Transverse colon (tissue), 4 donors: ENCODE measurements at regions of chr7 and their contacts with region 1.

Region 1: GRCh38 chr7:106570948-106571418 is 90.0 kb downstream of the CCDC71L start:
- DNase-seq: no peak
- H3K4me3 ChIP-seq: no peak overlapping the region
- H3K27ac ChIP-seq: no peak overlapping the region
- H3K4me1 ChIP-seq: peaks cover 0 to 4% (median 0%) of the 10 kb centered on the region in 4 donors
- H3K27me3 ChIP-seq: no peaks in the 10 kb centered on the region
- CTCF ChIP-seq: no peak
- EP300 ChIP-seq: no peak
- POLR2A ChIP-seq: no peak

Region 2: DNA sequence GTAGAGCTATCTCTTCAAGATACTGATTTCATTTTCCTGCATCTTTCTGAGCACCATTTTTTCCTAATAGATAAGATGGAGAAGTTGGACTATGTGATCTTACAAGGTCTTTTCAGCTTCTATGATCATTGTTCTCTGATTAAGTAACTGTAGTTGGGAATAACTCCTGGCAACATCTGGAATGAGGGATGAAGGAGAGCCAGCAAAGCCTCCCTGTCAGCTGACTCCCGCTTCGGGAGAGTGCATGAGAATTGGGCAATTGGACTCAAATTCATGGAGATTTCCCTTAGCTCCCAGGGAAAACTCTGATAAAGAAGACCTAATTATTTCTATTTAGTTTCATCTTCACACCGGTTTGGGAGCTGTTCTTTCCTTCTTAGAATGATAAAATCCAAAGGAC is 56.1 kb before region 1 on chr7:
- in situ Hi-C with region 1: no loop called
- intact Hi-C with region 1: loop called (anchors 10 kb)
- DNase-seq: no peak
- H3K4me3 ChIP-seq: no peak overlapping the region
- H3K27ac ChIP-seq: no peak overlapping the region
- H3K4me1 ChIP-seq: no peaks in the 10 kb centered on the region
- H3K27me3 ChIP-seq: no peaks in the 10 kb centered on the region
- CTCF ChIP-seq: no peak
- EP300 ChIP-seq: no peak
- POLR2A ChIP-seq: no peak